HepG2 (cell line): ENCODE measurements at regions of chr7 and their contacts with region 1.

Region 1: GRCh38 chr7:29207162-29207801 is 12.7 kb downstream of the CHN2 start:
- DNase-seq: peak; percentile 67
- ATAC-seq: peak; percentile 56
- H3K4me3 ChIP-seq: no peak overlapping the region
- H3K27ac ChIP-seq: peak overlapping the region; percentile 85
- H3K4me1 ChIP-seq: peaks cover 86% of the 10 kb centered on the region
- H3K27me3 ChIP-seq: no peaks in the 10 kb centered on the region
- CTCF ChIP-seq: no peak
- EP300 ChIP-seq: no peak
- POLR2A ChIP-seq: no peak
- RAD21 ChIP-seq: no peak

Region 2: DNA sequence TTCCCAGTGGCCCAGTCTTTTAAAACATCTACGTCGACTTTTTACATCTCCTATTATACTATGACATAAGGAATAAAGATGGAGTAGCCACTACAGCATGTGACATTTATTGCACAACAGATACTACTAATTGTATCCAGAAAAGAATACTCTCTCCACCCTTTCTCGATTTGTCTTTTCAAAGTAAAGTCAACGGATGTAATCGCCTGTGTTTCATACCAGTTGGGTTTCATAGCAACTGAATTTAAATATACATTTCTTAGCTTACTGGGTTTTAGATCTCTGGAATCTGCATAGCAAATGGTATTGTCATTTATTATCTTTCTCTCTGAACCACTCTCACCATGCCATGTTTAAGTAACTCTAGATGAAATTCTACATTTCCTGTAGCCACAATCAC is 162.7 kb before region 1 on chr7:
- CTCF ChIA-PET with region 1: no interaction called
- POLR2A ChIA-PET with region 1: no interaction called
- in situ Hi-C with region 1: no loop called
- intact Hi-C with region 1: no loop called
- DNase-seq: no peak
- ATAC-seq: no peak
- H3K4me3 ChIP-seq: no peak overlapping the region
- H3K27ac ChIP-seq: no peak overlapping the region
- H3K4me1 ChIP-seq: no peaks in the 10 kb centered on the region
- H3K27me3 ChIP-seq: no peaks in the 10 kb centered on the region
- CTCF ChIP-seq: no peak
- EP300 ChIP-seq: no peak
- POLR2A ChIP-seq: no peak
- RAD21 ChIP-seq: no peak

Region 3: GRCh38 chr7:29194594-29195427 is 12.5 kb before region 1 on chr7 and contains the start of gene CHN2:
- CTCF ChIA-PET with region 1: no interaction called
- POLR2A ChIA-PET with region 1: interaction called, 42 read pairs
- in situ Hi-C with region 1: no loop called
- intact Hi-C with region 1: loop called (anchors 2 kb)
- DNase-seq: peak; percentile 73
- ATAC-seq: peak; percentile 78
- H3K4me3 ChIP-seq: peak within 1 kb of the TSS; percentile 92 to 98 (median 98)
- H3K27ac ChIP-seq: peak within 1 kb of the TSS; percentile 88
- H3K4me1 ChIP-seq: peaks cover 80% of the 10 kb centered on the region
- H3K27me3 ChIP-seq: no peaks in the 10 kb centered on the region; a peak in 1 of 5 replicates
- CTCF ChIP-seq: peak; percentile 40; the same call in 1 of the 2 replicates
- EP300 ChIP-seq: no peak
- POLR2A ChIP-seq: peak in 1 of 2 experiments; percentile 75; a peak in 2 of 4 replicates
- RAD21 ChIP-seq: no peak; the same call in none of the 2 replicates
- total RNA-seq, gene CHN2: 23.5 and 28.6 TPM in 2 replicates

Region 4: DNA sequence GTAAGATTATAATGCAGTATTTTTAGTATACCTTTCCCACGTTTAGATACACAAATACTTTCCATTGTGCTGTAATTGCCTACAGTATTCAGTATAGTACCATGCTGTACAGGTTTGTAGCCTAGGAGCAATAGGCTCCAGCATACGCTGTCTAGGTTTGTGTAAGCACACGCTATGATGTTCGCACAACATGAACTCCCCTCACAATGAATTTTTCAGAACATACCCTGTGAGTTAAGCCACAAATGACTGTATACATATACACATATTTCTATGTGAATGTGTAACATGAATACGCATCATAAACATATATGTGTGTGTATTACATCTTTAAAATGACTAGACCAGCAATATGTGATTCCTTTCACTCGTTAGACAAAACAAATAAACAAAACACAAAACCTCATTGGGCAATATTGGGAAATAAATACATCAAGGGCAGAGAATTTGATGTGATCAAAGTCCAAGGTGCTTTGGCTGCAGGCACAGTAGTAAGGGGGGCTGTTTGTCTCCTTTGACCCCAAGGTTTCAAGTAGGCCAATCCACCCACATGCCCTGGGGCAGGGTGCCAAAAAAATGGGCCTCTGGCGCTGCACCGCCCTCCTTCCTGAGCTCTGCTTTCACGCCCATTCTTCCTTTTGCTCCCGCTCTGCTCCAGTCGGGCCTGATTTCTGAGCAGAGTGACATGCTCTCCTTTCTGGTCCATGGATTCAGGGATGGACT is 21.2 kb after region 1 on chr7:
- CTCF ChIA-PET with region 1: no interaction called
- POLR2A ChIA-PET with region 1: interaction called, 5 read pairs
- in situ Hi-C with region 1: no loop called
- intact Hi-C with region 1: loop called (anchors 1 kb)
- DNase-seq: peak; percentile 92
- ATAC-seq: peak; percentile 79
- H3K4me3 ChIP-seq: peak overlapping the region in 1 of 3 experiments; percentile 36; a peak in 2 of 6 replicates
- H3K27ac ChIP-seq: peak overlapping the region; percentile 79
- H3K4me1 ChIP-seq: peaks cover 80% of the 10 kb centered on the region
- H3K27me3 ChIP-seq: no peaks in the 10 kb centered on the region
- CTCF ChIP-seq: no peak
- EP300 ChIP-seq: peak; percentile 89 to 94
- POLR2A ChIP-seq: no peak
- RAD21 ChIP-seq: peak; percentile 41; the same call in 1 of the 2 replicates

Region 5: GRCh38 chr7:29248713-29249382 is 41.6 kb after region 1 on chr7:
- CTCF ChIA-PET with region 1: no interaction called
- POLR2A ChIA-PET with region 1: interaction called, 3 read pairs
- in situ Hi-C with region 1: no loop called
- intact Hi-C with region 1: loop called (anchors 5 kb)
- DNase-seq: peak; percentile 88
- ATAC-seq: peak; percentile 95
- H3K4me3 ChIP-seq: no peak overlapping the region
- H3K27ac ChIP-seq: peak overlapping the region; percentile 66
- H3K4me1 ChIP-seq: peaks cover 53% of the 10 kb centered on the region
- H3K27me3 ChIP-seq: no peaks in the 10 kb centered on the region
- CTCF ChIP-seq: no peak
- EP300 ChIP-seq: peak in 1 of 2 experiments; percentile 86; a peak in 2 of 4 replicates
- POLR2A ChIP-seq: no peak
- RAD21 ChIP-seq: peak; percentile 44; the same call in 1 of the 2 replicates

Region 6: GRCh38 chr7:29337546-29338116 is 130.3 kb after region 1 on chr7:
- CTCF ChIA-PET with region 1: no interaction called
- POLR2A ChIA-PET with region 1: no interaction called
- in situ Hi-C with region 1: no loop called
- intact Hi-C with region 1: loop called (anchors 1 kb)
- DNase-seq: no peak
- ATAC-seq: no peak; the same call in 2 of the 3 replicates
- H3K4me3 ChIP-seq: peak overlapping the region in 2 of 3 experiments; percentile 1 to 9; a peak in 2 of 6 replicates
- H3K27ac ChIP-seq: peak overlapping the region; percentile 56
- H3K4me1 ChIP-seq: peaks cover 85% of the 10 kb centered on the region
- H3K27me3 ChIP-seq: no peaks in the 10 kb centered on the region
- CTCF ChIP-seq: no peak
- EP300 ChIP-seq: no peak
- POLR2A ChIP-seq: no peak
- RAD21 ChIP-seq: no peak

Region 7: GRCh38 chr7:29564496-29565223 is 357.4 kb after region 1 on chr7:
- CTCF ChIA-PET with region 1: no interaction called
- POLR2A ChIA-PET with region 1: no interaction called
- in situ Hi-C with region 1: no loop called
- intact Hi-C with region 1: loop called (anchors 10 kb)
- DNase-seq: peak; percentile 50
- ATAC-seq: peak; percentile 62
- H3K4me3 ChIP-seq: peak overlapping the region; percentile 67 to 97 (median 79)
- H3K27ac ChIP-seq: peak overlapping the region; percentile 87
- H3K4me1 ChIP-seq: peaks cover 53% of the 10 kb centered on the region
- H3K27me3 ChIP-seq: no peaks in the 10 kb centered on the region; a peak in 1 of 5 replicates
- CTCF ChIP-seq: peak; percentile 23; the same call in 1 of the 2 replicates
- EP300 ChIP-seq: no peak
- POLR2A ChIP-seq: no peak
- RAD21 ChIP-seq: no peak

Region 8: GRCh38 chr7:30114536-30115238 is 907.4 kb after region 1 on chr7:
- CTCF ChIA-PET with region 1: no interaction called
- POLR2A ChIA-PET with region 1: no interaction called
- in situ Hi-C with region 1: no loop called
- intact Hi-C with region 1: no loop called
- DNase-seq: no peak
- ATAC-seq: no peak
- H3K4me3 ChIP-seq: no peak overlapping the region
- H3K27ac ChIP-seq: no peak overlapping the region
- H3K4me1 ChIP-seq: no peaks in the 10 kb centered on the region
- H3K27me3 ChIP-seq: no peaks in the 10 kb centered on the region
- CTCF ChIP-seq: no peak
- EP300 ChIP-seq: no peak
- POLR2A ChIP-seq: no peak
- RAD21 ChIP-seq: no peak